Activated CD4-positive, alpha-beta T cell treated with anti-CD3 and anti-CD28 coated beads for 36 hours (primary cell): ENCODE measurements at regions of chr2 and their contacts with region 1.

Region 1: GRCh38 chr2:148989882-148990493 is 48.5 kb upstream of the LYPD6B start:
- DNase-seq: peak; percentile 61
- ATAC-seq: peak; percentile 82
- H3K4me3 Mint-ChIP-seq: no peak overlapping the region
- H3K27ac Mint-ChIP-seq: no peak overlapping the region
- H3K4me1 Mint-ChIP-seq: no peaks in the 10 kb centered on the region
- H3K27me3 Mint-ChIP-seq: no peaks in the 10 kb centered on the region

Region 2: GRCh38 chr2:147937744-147938349 is 1052.1 kb before region 1 on chr2:
- CTCF ChIA-PET with region 1: no interaction called
- POLR2A ChIA-PET with region 1: no interaction called
- intact Hi-C with region 1: loop called (anchors 1 kb)
- DNase-seq: no peak
- ATAC-seq: no peak
- H3K4me3 Mint-ChIP-seq: no peak overlapping the region
- H3K27ac Mint-ChIP-seq: no peak overlapping the region
- H3K4me1 Mint-ChIP-seq: no peaks in the 10 kb centered on the region
- H3K27me3 Mint-ChIP-seq: no peaks in the 10 kb centered on the region

Region 3: DNA sequence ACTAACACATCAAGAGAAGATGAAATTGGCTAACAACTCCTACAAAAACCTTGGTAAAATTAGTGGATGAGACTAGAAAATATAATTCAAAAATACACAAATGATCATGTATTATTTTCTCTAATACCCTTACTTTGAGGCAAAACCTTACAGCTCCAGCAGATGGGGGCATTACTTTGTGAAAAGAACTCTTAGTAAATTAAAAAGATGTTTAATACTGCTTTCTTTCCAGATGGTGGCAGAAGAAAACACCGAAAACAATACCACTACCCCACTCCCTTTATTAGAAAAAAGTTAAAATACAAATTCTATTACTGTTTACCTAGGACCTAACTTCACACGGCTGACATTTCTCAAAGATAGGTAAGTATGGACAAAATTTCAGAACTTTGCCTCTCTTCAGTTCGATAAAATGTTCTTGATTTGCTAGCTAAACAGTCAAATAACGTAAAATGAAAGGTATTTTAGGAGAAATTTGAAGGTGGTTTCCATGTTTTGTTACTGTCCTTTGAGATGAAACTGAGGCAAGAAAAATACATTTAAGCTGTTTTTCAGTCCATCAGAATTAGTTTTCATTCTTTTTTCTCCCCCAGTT is 1000.1 kb before region 1 on chr2:
- CTCF ChIA-PET with region 1: interaction called, 3 read pairs
- POLR2A ChIA-PET with region 1: no interaction called
- intact Hi-C with region 1: loop called in 1 of 2 experiments (anchors 2 kb)
- DNase-seq: peak; percentile 15
- ATAC-seq: peak; percentile 47
- H3K4me3 Mint-ChIP-seq: no peak overlapping the region
- H3K27ac Mint-ChIP-seq: no peak overlapping the region
- H3K4me1 Mint-ChIP-seq: peaks cover 9% of the 10 kb centered on the region
- H3K27me3 Mint-ChIP-seq: no peaks in the 10 kb centered on the region

Region 4: DNA sequence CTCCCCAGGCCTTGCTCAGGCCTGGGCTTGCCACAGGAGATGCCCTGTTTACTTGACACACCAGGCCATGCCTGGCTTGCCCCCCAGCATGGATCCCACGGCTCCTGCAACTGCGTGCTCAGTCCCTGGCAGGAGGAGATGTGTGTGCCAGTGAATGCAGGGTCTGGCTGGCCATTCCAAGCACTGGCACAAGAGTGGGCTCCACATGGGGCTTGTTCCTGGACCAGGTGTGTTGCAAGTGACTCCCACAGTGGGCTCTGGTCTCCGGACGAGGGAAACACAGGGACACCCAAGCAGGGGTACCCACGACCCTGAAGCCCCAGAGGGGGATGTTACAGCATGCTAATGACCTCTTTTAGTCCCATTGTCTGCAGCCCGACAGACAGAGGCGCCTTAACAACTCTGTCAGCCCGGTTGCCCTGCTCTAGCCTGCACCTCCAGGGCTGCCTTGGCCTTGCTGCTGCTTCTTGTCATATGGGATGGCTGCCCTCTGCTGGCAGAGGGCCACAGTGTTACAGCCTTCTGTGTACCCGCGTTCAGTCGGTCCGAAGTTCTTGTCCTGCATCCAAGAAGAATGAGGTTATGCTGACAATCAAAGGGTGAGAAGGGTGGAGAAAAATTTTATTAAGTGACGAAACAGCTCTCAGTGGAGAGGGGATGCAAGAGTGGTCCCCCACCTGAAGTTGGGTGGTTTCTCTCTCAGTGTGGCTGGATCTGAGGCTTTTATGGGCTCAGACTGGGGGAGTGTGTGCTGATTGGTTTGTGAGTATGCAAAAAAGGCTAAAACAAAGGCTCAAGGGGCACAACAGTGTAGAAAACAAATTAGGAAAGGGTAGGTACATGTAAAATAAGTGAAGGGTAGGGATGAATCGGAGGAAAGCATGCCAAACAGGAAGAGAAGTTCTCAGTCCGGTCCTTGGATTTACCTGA is 788.6 kb before region 1 on chr2:
- CTCF ChIA-PET with region 1: no interaction called
- POLR2A ChIA-PET with region 1: no interaction called
- intact Hi-C with region 1: loop called in 1 of 2 experiments (anchors 10 kb)
- DNase-seq: peak; percentile 70
- ATAC-seq: peak; percentile 84
- H3K4me3 Mint-ChIP-seq: no peak overlapping the region
- H3K27ac Mint-ChIP-seq: no peak overlapping the region
- H3K4me1 Mint-ChIP-seq: no peaks in the 10 kb centered on the region
- H3K27me3 Mint-ChIP-seq: no peaks in the 10 kb centered on the region

Region 5: DNA sequence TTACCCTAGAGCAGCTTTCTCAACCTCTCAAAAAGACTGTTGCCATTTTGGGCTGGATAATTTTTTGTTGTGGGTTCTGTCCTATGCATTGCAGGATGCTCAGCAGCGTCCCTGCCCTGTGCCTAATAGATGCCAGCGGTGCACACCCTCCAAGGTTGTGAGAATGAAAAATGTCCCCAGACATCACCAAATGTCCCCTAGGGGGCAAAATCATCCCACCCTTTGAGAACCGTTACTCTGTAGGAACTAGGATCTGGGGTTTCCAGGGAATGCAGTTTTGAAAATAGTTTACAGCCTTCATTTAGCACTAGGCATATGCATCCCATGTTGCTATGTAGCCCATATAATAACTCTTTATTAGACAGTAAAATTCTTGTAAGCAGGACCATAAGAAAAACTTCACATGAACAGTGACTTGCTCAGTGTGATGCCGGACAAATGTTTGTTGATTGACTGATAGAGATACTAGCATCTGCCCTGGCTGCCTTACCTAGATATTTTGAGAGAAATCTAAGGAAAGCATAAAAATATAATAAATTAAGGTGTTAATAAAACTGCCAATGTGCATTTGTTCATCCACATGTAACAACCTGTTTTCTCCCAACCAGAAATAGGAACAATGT is 424.6 kb before region 1 on chr2:
- CTCF ChIA-PET with region 1: no interaction called
- POLR2A ChIA-PET with region 1: no interaction called
- intact Hi-C with region 1: loop called in 1 of 2 experiments (anchors 5 kb)
- DNase-seq: no peak
- ATAC-seq: no peak
- H3K4me3 Mint-ChIP-seq: no peak overlapping the region
- H3K27ac Mint-ChIP-seq: no peak overlapping the region
- H3K4me1 Mint-ChIP-seq: peaks cover 12% of the 10 kb centered on the region
- H3K27me3 Mint-ChIP-seq: no peaks in the 10 kb centered on the region

Region 6: DNA sequence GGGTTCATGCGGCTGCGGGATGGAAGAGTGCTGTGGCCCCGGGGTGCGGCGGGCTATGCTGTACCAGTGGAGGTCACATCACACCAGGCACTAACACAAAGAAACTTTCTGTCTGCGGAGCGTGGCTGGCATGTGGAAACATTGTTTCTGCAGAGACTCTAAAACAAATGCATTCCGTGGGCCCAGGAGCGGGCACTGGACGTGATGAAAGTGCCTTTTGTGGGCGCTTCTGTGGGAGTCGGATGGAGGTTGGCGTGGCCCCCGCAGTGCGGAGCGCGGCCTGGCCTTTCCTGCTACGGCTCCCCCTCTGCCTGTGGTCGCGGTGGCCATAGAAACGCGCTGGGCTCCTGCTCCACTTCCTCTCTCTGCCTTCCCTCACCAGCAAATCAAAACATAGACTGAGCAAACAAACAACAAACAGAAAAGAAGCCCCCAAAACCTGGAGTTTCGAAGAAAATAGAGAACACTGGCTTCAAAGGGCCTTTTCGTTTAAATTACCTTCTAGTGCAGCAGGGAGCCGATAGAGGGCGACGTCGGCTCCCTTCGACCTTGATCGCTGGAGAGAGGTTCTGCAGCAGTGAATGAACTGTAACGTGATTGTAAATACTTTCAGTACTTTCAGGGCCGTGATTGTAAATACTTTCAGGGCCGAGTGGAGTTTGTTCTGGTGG is 63.6 kb before region 1 on chr2:
- CTCF ChIA-PET with region 1: interaction called, 4 read pairs
- POLR2A ChIA-PET with region 1: no interaction called
- intact Hi-C with region 1: loop called (anchors 1 to 5 kb)
- DNase-seq: peak; percentile 78
- ATAC-seq: peak; percentile 84
- H3K4me3 Mint-ChIP-seq: peak overlapping the region; percentile 78
- H3K27ac Mint-ChIP-seq: peak overlapping the region; percentile 88
- H3K4me1 Mint-ChIP-seq: peaks cover 16% of the 10 kb centered on the region
- H3K27me3 Mint-ChIP-seq: no peaks in the 10 kb centered on the region